Gastrocnemius medialis (tissue), 4 donors: ENCODE measurements at regions of chr10 and their contacts with region 1.

Region 1: DNA sequence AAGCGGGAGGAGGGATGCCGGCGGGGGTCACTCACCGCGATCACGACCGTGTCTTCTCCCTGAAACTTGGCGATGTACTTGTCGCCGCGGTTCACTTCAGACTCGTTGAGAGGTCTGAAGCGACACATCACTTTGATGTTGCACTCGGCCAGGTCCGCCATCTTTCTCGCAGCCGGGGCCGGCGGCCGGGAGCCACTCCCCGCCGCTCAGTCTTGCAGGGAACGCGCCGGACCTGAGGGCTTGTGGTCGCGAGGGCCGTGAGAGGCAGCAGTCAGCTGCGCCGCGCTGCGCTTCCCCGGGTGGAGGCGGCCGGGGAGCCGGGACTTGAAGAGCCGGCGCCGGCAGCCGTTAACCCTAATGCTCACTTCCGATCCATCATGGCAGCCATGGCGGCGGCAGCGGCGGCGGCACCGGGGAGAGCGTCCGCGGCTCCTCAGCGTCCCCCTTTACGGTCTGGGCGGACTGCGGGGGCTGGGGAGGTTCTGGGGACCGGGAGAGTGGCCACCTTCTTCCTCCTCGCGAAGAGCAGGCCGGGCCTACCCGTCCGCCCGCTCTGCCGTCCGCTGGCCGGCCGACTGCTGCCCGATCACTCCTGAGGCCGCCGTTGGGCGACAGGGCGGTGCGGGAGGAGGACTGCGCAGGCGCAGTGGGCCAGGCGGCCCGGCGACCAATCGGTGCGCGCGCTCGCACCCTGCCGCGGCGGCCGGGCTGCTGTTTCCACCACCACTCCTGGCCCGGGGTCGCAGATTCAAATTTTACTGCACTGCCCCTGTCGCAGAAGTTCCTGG is at the start of gene KIF5B:
- DNase-seq: peak; percentile 75 to 82
- ATAC-seq: peak; percentile 89 to 91
- H3K4me3 ChIP-seq: peak within 1 kb of the TSS; percentile 75 to 91 (median 84)
- H3K27ac ChIP-seq: peak within 1 kb of the TSS; percentile 87 to 99 (median 96)
- H3K4me1 ChIP-seq: peaks cover 34 to 36% of the 10 kb centered on the region in 2 donors
- H3K27me3 ChIP-seq: no peaks in the 10 kb centered on the region
- CTCF ChIP-seq: no peak
- POLR2A ChIP-seq: peak; percentile 98 to 99
- total RNA-seq, gene KIF5B: 123 to 151 (median 142) TPM

Region 2: DNA sequence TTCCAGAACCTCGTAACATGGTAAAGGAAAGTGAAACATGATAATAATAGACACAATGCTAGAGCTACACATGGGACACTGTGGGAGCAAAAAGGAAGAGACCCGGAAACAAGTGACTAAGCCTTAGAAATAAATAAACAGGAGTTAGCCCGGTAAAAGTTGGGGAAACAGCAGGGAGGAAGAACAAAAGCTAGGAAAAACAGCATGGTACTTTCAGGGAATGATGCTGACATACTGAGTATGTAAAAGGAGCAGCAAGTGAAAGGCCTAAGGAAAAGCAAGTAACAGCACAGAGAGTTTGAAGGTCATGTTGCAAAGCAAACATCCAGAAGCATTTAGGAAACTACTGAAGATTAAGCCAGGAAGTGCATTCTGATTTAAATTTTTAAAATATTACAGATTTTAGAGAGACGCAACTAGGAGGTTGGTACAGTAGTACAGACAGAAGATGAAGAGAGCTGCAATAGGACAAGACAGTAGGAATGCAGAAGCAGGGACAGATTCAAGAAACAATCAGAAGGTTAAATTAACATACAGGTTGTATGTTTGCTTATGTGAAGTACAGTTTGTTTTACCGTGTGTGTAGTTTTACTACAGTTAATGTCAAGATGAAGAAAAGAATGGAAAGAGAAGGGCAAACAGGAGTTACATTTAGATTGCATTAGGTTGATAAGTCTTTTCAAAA is 191.0 kb before region 1 on chr10:
- in situ Hi-C with region 1: no loop called
- intact Hi-C with region 1: loop called (anchors 2 kb)
- DNase-seq: no peak
- ATAC-seq: no peak
- H3K4me3 ChIP-seq: peak overlapping the region; percentile 1 to 22 (median 4)
- H3K27ac ChIP-seq: peak overlapping the region in 3 of 4 donors; percentile 31 to 44 (median 41)
- H3K4me1 ChIP-seq: peaks cover 28 to 32% of the 10 kb centered on the region in 2 donors
- H3K27me3 ChIP-seq: no peaks in the 10 kb centered on the region
- CTCF ChIP-seq: no peak
- POLR2A ChIP-seq: no peak

Region 3: GRCh38 chr10:31977440-31978155 is 78.4 kb before region 1 on chr10:
- in situ Hi-C with region 1: no loop called
- intact Hi-C with region 1: no loop called
- DNase-seq: no peak
- ATAC-seq: no peak
- H3K4me3 ChIP-seq: no peak overlapping the region
- H3K27ac ChIP-seq: no peak overlapping the region
- H3K4me1 ChIP-seq: no peaks in the 10 kb centered on the region
- H3K27me3 ChIP-seq: no peaks in the 10 kb centered on the region
- CTCF ChIP-seq: no peak
- POLR2A ChIP-seq: no peak

Region 4: GRCh38 chr10:32023264-32023663 is 32.7 kb before region 1 on chr10:
- in situ Hi-C with region 1: no loop called
- intact Hi-C with region 1: no loop called
- DNase-seq: no peak
- ATAC-seq: no peak
- H3K4me3 ChIP-seq: no peak overlapping the region
- H3K27ac ChIP-seq: no peak overlapping the region
- H3K4me1 ChIP-seq: no peaks in the 10 kb centered on the region
- H3K27me3 ChIP-seq: no peaks in the 10 kb centered on the region
- CTCF ChIP-seq: no peak
- POLR2A ChIP-seq: no peak

Region 5: GRCh38 chr10:32346134-32346550 is 290.1 kb after region 1 on chr10:
- in situ Hi-C with region 1: loop called in 2 of 4 experiments (anchors 25 kb)
- intact Hi-C with region 1: loop called (anchors 1 kb)
- DNase-seq: peak; percentile 95 to 97
- ATAC-seq: peak; percentile 84 to 85
- H3K4me3 ChIP-seq: peak overlapping the region; percentile 78 to 98 (median 89)
- H3K27ac ChIP-seq: peak overlapping the region; percentile 96 to 100 (median 100)
- H3K4me1 ChIP-seq: peaks cover 64 to 66% of the 10 kb centered on the region in 2 donors
- H3K27me3 ChIP-seq: no peaks in the 10 kb centered on the region
- CTCF ChIP-seq: peak; percentile 97 to 99 (median 99)
- POLR2A ChIP-seq: peak in 1 of 2 donors; percentile 42

Region 6: DNA sequence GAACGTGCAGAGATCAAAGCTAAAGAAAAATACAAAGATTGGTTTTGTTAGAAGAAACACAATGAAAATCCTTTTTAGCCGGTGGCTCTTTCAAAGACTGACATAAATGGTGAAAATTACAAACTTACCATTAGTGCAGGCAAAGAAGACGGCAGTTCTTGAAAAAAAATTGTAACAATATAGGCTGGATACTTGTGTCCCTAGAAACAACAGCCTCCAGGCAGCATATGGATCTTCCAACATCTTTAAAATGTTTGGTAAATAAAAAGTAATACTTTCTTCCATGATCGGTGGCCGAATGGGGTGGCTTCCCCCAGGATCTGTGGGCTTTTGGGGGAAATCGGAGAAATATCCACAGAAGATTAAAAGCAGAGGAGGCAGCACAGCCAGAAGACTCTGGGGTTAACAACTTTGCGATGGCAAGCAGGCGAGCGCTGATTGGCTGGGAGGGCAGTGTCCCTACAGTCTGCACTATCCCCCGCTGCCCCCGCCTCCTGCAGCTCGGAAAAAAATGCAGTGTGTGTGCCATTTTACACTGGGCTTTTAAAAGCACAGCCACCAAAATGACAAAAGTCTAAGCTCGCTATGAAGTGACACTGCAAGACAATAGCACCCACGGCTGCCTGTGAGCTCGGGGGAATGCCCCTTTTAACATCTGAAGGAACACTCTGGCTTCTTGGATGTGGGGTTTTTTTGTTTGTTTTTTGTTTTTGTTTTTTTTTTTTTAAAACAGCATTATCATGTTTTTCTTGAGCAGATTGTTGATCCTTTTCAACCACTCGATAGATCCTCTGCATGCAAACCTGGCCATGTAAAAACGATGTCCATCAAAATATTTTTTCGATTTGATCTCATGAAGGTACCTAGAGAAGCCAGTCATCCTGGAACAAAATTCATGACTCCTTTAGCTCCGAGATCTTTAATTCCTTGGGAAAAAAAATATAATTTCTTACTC is 322.6 kb after region 1 on chr10:
- in situ Hi-C with region 1: loop called in 2 of 4 experiments (anchors 10 to 25 kb)
- intact Hi-C with region 1: loop called (anchors 5 kb)
- DNase-seq: peak; percentile 93 to 95
- ATAC-seq: peak; percentile 94 to 96
- H3K4me3 ChIP-seq: peak overlapping the region; percentile 66 to 88 (median 78)
- H3K27ac ChIP-seq: peak overlapping the region; percentile 80 to 93 (median 84)
- H3K4me1 ChIP-seq: peaks cover 30 to 37% of the 10 kb centered on the region in 2 donors
- H3K27me3 ChIP-seq: no peaks in the 10 kb centered on the region
- CTCF ChIP-seq: peak in 1 of 5 experiments; percentile 9
- POLR2A ChIP-seq: peak; percentile 34 to 55

Region 7: DNA sequence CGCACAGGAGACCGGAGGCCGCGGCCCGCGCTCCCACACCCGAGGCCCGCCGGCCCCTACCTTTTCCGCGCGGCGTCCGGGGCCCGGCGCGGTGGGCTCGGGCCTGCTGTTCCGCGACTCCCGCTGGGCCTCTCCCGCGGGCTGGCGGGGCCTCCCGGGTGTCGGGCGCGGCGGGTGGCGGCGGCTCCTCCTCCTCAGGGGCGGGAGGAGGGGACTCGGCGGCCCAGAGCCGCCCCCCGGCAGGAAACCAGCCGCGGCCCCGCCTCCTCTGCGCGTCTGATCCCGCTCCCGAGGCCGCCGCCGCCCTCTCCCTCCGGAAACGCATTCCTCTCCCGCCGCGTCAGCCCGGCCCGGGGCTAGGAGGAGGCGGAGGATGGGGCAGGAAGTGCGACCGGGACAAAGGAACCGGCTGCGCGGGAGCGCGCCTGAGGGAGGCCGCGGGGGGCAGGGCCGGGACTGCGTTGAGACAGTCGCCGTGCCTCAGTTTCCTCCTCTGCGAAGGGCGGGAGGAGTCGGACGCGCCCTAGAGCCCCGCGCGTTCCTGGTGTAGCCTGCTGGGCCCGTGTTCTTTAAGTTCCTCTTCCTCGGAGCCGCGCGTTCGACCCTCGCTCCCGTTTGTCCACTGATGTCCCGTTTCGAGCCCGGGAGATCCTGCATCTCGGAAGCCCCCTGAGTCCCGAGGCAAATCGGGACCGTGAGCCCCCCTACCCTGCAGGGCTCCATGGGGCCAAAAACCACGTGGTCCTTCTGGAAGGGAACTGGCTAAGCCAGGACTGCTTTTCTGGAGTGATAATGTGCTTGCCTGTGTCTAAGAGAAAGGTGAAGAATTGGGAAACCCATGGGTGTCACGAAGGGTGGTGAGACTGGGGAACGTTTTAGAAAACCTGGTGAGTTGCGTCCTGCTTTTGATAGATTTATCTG is 902.3 kb after region 1 on chr10 and contains the start of gene ITGB1:
- in situ Hi-C with region 1: no loop called
- intact Hi-C with region 1: loop called (anchors 10 kb)
- DNase-seq: peak; percentile 94 to 96
- ATAC-seq: peak; percentile 87 to 90
- H3K4me3 ChIP-seq: peak within 1 kb of the TSS; percentile 72 to 96 (median 76)
- H3K27ac ChIP-seq: peak within 1 kb of the TSS; percentile 93 to 98 (median 96)
- H3K4me1 ChIP-seq: peaks cover 53 to 64% of the 10 kb centered on the region in 2 donors
- H3K27me3 ChIP-seq: no peaks in the 10 kb centered on the region
- CTCF ChIP-seq: no peak
- POLR2A ChIP-seq: peak; percentile 94 to 97
- total RNA-seq, gene ITGB1: 242 to 379 (median 368) TPM